GM12878 (cell line): ENCODE measurements at regions of chr2 and their contacts with region 1.

Region 1: GRCh38 chr2:28566521-28567041 is 70.7 kb downstream of the PLB1 start:
- DNase-seq: peak; percentile 8
- ATAC-seq: peak; percentile 99
- H3K4me3 ChIP-seq: peak overlapping the region; percentile 87
- H3K27ac ChIP-seq: no peak overlapping the region
- H3K4me1 ChIP-seq: peaks cover 3% of the 10 kb centered on the region; the same call in 1 of the 2 replicates
- H3K27me3 ChIP-seq: no peaks in the 10 kb centered on the region; a peak in 1 of 4 replicates
- CTCF ChIP-seq: peak; percentile 98 to 100 (median 100); a peak in 5 of 6 replicates
- EP300 ChIP-seq: no peak
- POLR2A ChIP-seq: no peak
- RAD21 ChIP-seq: peak; percentile 91

Region 2: DNA sequence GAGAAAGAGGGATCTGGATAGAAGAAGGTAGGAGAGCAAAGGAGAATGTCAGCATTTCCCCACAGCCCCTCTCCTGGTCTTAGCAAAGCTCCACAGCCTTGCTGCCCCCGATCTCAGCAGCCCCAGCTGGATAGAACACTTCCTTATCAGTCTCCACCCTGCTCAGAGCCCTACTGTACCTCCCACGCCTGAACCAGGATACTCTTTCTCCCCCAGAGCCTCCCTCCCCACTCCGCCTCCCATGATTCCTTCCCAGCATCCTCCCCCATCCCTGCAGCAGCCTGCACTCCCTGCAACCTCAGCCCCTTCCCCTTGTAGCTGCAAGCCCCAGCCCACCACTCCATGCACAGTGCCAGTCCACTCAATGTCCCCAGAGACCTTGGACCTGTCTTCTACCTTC is 44.9 kb before region 1 on chr2:
- CTCF ChIA-PET with region 1: no interaction called
- POLR2A ChIA-PET with region 1: no interaction called
- RAD21 ChIA-PET with region 1: no interaction called
- SMC1A ChIA-PET with region 1: no interaction called
- in situ Hi-C with region 1: no loop called
- intact Hi-C with region 1: no loop called
- DNase-seq: no peak
- ATAC-seq: no peak
- H3K4me3 ChIP-seq: no peak overlapping the region
- H3K27ac ChIP-seq: no peak overlapping the region
- H3K4me1 ChIP-seq: no peaks in the 10 kb centered on the region
- H3K27me3 ChIP-seq: peaks cover 2% of the 10 kb centered on the region in 2 experiments; a peak in 3 of 4 replicates
- CTCF ChIP-seq: no peak
- EP300 ChIP-seq: no peak
- POLR2A ChIP-seq: no peak
- RAD21 ChIP-seq: no peak

Region 3: DNA sequence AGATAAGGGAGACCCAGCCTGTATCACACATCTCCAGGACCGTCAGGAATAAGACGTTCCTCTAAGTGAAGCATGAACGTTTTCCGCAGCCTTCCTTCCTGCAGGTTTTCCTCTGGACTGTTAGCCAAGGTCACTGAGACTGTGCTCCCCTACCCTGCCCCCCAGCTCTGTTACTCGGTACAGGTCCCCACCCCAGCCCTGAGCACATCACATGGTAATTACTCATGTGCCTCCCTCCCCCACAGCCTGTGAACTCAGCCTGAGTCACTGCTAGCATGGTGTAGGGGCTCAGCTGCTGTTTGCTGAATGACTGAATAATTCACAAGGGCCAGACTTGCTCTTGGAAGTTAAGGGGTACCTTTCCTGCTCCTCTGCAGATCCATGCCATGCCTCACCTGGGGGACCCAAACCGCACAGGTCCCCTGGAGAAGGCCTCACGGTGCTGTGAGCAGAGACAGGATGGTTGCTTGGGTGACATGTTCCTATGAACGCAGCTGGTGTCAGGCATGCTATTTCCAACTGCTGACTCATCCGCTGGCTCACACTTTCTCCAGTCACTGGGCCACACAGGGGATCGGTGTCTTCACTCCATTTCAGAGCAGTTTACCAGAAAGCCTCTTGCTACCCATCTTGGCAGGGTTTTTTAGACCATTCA is 17.4 kb after region 1 on chr2:
- CTCF ChIA-PET with region 1: interaction called, 12 read pairs
- POLR2A ChIA-PET with region 1: no interaction called
- RAD21 ChIA-PET with region 1: no interaction called
- SMC1A ChIA-PET with region 1: interaction called, 3 read pairs
- in situ Hi-C with region 1: no loop called
- intact Hi-C with region 1: no loop called
- DNase-seq: no peak
- ATAC-seq: peak; percentile 56
- H3K4me3 ChIP-seq: no peak overlapping the region
- H3K27ac ChIP-seq: no peak overlapping the region
- H3K4me1 ChIP-seq: peaks cover 7% of the 10 kb centered on the region; the same call in 1 of the 2 replicates
- H3K27me3 ChIP-seq: no peaks in the 10 kb centered on the region
- CTCF ChIP-seq: no peak
- EP300 ChIP-seq: no peak
- POLR2A ChIP-seq: no peak
- RAD21 ChIP-seq: no peak

Region 4: GRCh38 chr2:28751252-28751955 is 184.8 kb after region 1 on chr2 and contains the start of gene PPP1CB:
- CTCF ChIA-PET with region 1: interaction called, 7 read pairs
- POLR2A ChIA-PET with region 1: interaction called, 4 read pairs
- RAD21 ChIA-PET with region 1: interaction called, 11 read pairs
- SMC1A ChIA-PET with region 1: no interaction called
- in situ Hi-C with region 1: no loop called
- intact Hi-C with region 1: loop called (anchors 2 kb)
- DNase-seq: peak; percentile 87
- ATAC-seq: peak; percentile 91
- H3K4me3 ChIP-seq: peak within 1 kb of the TSS; percentile 98
- H3K27ac ChIP-seq: peak within 1 kb of the TSS; percentile 90
- H3K4me1 ChIP-seq: peaks cover 6% of the 10 kb centered on the region; the same call in 1 of the 2 replicates
- H3K27me3 ChIP-seq: no peaks in the 10 kb centered on the region
- CTCF ChIP-seq: peak; percentile 18 to 31 (median 27); a peak in 3 of 6 replicates
- EP300 ChIP-seq: peak in 1 of 2 experiments; percentile 21; a peak in 1 of 4 replicates
- POLR2A ChIP-seq: peak; percentile 85
- RAD21 ChIP-seq: no peak
- polyA plus RNA-seq, gene PPP1CB: 84.4 to 176 TPM

Region 5: DNA sequence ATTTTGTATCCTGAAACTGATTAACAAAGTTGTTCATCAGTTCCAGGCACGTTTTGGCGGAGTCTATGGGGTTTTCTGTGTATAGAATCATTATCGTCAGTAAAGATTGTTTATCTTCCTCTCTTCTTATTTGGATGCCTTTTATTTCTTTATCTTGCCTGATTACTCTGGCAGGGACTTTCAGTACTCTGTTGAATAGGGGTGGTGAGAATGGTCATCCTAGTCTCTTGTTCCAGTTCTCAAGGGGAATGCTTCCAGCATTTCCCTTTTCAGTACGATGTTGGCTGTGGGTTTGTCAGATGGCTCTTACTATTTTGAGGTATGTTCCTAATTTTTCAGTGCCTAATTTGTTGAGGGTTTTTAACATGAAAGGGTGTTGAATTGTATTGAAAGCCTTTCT is 230.0 kb after region 1 on chr2:
- CTCF ChIA-PET with region 1: no interaction called
- POLR2A ChIA-PET with region 1: no interaction called
- RAD21 ChIA-PET with region 1: no interaction called
- SMC1A ChIA-PET with region 1: no interaction called
- in situ Hi-C with region 1: no loop called
- intact Hi-C with region 1: no loop called
- DNase-seq: no peak
- ATAC-seq: no peak
- H3K4me3 ChIP-seq: no peak overlapping the region
- H3K27ac ChIP-seq: no peak overlapping the region
- H3K4me1 ChIP-seq: no peaks in the 10 kb centered on the region
- H3K27me3 ChIP-seq: no peaks in the 10 kb centered on the region
- CTCF ChIP-seq: no peak
- EP300 ChIP-seq: no peak
- POLR2A ChIP-seq: no peak
- RAD21 ChIP-seq: no peak